Activated T-helper 2 cell treated with anti-CD3 and anti-CD28 coated beads, Interferon-gamma antibody, Interleukin-2, Interleukin-4, amounts not matched to agents 10 μg/mL and 5 μg/mL and 100 μg/mL, durations not matched to agents 14 hours and 24 hours and 36 hours (primary cell): ENCODE measurements at regions of chr19 and their contacts with region 1.

Region 1: DNA sequence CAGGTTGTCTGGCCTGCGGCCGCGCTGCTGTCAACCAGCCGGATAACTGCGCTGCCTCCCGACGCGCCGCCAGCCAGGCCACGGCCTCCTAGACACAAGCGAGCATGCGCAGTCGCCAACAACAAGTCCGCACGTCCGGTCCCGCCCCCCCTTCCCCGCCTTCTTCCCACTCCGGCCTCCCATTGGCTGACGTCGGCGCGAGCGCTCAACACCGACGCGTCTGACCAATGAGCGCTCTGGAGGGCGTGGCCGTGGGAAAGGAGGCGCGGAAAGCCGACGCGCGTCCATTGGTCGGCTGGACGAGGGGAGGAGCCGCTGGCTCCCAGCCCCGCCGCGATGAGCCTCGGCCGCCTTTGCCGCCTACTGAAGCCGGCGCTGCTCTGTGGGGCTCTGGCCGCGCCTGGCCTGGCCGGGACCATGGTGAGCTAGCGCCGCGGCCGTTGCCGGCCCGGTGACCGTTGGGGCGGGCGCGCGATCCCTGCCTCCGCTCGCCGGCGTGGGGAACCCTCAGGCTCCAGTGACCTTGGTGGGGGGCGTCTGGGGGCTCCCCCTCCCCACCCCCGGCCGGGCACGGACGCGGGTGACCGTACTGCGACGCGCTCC is at the start of gene GPX4:
- DNase-seq: peak; percentile 96
- H3K4me3 Mint-ChIP-seq: peak within 1 kb of the TSS; percentile 73
- H3K27ac Mint-ChIP-seq: peak within 1 kb of the TSS; percentile 93
- H3K4me1 Mint-ChIP-seq: peaks cover 32% of the 10 kb centered on the region
- H3K27me3 Mint-ChIP-seq: no peaks in the 10 kb centered on the region
- total RNA-seq, gene GPX4: 257 TPM in 2 replicates

Region 2: DNA sequence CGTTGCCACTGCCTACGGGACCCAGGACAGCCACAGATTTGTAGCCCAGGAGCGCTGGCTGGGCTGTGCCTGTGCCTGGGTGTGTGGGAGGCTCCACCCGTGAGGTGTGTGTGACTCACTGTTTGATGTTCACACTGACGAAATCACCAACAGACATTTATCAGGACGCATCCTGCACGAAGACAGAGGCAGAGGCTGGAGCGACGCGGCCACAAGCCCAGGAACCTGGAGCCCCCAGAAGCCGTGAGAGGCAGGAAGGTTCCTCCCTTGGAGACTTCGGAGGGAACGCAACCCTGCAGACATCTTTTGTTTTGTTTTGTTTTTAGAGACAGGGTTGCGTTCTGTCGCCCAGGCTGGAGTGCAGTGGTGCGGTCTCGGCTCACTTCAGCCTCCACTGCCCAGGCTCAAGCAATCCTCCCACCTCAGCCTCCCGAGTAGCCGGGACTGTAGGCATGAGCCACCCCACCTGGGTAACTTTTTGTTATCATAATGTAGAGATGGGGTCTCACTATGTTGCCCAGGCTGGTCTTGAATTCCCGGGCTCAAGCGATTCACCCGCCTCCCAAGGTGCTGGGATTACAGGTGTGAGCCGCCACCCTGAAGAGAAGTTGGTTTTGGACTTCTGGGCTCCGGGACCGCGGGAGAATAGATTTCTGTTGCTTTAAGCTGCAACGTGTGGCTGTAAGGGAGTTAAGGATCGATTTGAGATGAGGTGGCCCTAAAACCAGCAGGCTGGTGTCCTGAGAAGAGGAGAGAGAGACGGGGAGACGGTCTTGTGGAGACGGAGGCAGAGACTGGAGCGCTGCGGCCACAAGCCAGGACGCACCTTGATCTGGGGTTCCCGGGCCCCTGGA is 144.6 kb before region 1 on chr19:
- intact Hi-C with region 1: no loop called
- DNase-seq: no peak
- H3K4me3 Mint-ChIP-seq: no peak overlapping the region
- H3K27ac Mint-ChIP-seq: peak overlapping the region; percentile 22
- H3K4me1 Mint-ChIP-seq: peaks cover 7% of the 10 kb centered on the region
- H3K27me3 Mint-ChIP-seq: no peaks in the 10 kb centered on the region

Region 3: DNA sequence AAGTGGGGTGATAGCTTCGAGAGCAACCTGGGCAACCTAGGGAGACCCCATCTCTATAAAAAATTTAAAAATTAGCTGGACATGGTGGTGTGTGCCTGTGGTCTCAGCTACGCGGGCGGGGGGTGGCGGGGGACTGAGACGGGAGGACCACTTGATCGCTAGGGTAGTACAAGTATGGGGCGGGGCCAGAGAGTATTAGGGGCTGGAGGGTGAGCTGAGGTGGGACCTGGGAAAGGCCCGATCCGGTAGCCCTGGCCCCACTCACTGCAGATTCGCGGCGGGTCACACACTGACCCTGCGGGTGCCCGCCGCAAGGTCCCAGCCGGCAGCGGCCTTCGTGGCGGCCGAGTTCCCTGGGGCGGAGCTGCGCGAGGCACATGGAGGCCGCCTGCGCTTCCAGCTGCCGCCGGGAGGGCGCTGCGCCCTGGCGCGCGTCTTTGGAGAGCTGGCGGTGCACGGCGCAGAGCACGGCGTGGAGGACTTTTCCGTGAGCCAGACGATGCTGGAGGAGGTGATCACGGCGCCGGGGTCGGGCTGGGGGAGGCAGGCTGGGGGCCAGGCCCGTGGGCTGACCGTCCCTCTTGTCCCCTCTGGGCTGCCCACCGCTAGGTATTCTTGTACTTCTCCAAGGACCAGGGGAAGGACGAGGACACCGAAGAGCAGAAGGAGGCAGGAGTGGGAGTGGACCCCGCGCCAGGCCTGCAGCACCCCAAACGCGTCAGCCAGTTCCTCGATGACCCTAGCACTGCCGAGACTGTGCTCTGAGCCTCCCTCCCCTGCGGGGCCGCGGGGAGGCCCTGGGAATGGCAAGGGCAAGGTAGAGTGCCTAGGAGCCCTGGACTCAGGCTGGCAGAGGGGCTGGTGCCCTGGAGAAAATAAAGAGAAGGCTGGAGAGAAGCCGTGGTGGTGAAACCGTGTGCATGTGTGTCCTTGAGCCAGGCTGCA is 38.9 kb before region 1 on chr19:
- intact Hi-C with region 1: loop called (anchors 2 kb)
- DNase-seq: peak; percentile 72
- H3K4me3 Mint-ChIP-seq: peak overlapping the region; percentile 13
- H3K27ac Mint-ChIP-seq: peak overlapping the region; percentile 60
- H3K4me1 Mint-ChIP-seq: peaks cover 20% of the 10 kb centered on the region
- H3K27me3 Mint-ChIP-seq: no peaks in the 10 kb centered on the region

Region 4: GRCh38 chr19:1074544-1075283 is 29.1 kb before region 1 on chr19:
- intact Hi-C with region 1: loop called (anchors 1 kb)
- DNase-seq: peak; percentile 76
- H3K4me3 Mint-ChIP-seq: peak overlapping the region; percentile 72
- H3K27ac Mint-ChIP-seq: peak overlapping the region; percentile 91
- H3K4me1 Mint-ChIP-seq: peaks cover 40% of the 10 kb centered on the region
- H3K27me3 Mint-ChIP-seq: no peaks in the 10 kb centered on the region

Region 5: DNA sequence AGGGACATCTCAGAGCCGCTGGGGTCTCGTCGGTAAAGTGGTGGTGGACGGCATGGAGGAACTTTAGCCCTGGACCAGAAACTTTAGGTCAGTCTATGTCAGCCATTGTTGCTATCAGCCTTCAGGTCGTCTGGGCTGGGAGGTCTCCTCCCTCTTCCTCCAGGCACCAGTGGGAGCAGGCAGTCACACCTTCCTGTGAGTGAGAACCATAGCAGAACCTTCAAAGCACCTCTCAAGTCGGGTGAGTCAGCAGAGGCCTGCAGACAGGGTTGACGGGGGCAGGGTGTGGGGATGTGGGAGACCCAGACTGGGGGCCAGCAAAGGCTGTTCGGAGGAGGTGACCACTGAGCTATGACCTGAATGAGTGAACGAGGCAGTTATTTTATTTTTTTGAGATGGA is 85.6 kb after region 1 on chr19:
- intact Hi-C with region 1: loop called (anchors 5 kb)
- DNase-seq: peak; percentile 25
- H3K4me3 Mint-ChIP-seq: no peak overlapping the region
- H3K27ac Mint-ChIP-seq: peak overlapping the region; percentile 51
- H3K4me1 Mint-ChIP-seq: peaks cover 16% of the 10 kb centered on the region
- H3K27me3 Mint-ChIP-seq: no peaks in the 10 kb centered on the region